Naive thymus-derived CD4-positive, alpha-beta T cell (primary cell): ENCODE measurements at regions of chr18 and their contacts with region 1.

Region 1: GRCh38 chr18:31563778-31564177 is 27.9 kb upstream of the TTR start:
- DNase-seq: no peak
- ATAC-seq: no peak
- H3K4me3 ChIP-seq: no peak overlapping the region
- H3K4me3 Mint-ChIP-seq: no peak overlapping the region
- H3K27ac ChIP-seq: no peak overlapping the region
- H3K27ac Mint-ChIP-seq: no peak overlapping the region
- H3K4me1 ChIP-seq: no peaks in the 10 kb centered on the region
- H3K4me1 Mint-ChIP-seq: no peaks in the 10 kb centered on the region
- H3K27me3 ChIP-seq: no peaks in the 10 kb centered on the region
- H3K27me3 Mint-ChIP-seq: peaks cover 0 to 14% (median 9%) of the 10 kb centered on the region in 5 donors

Region 2: GRCh38 chr18:30971338-30971956 is 592.3 kb before region 1 on chr18:
- CTCF ChIA-PET with region 1: interaction called, 3 read pairs
- POLR2A ChIA-PET with region 1: no interaction called
- intact Hi-C with region 1: loop called in 1 of 2 experiments (anchors 2 kb)
- DNase-seq: peak in 3 of 9 donors; percentile 4 to 14 (median 8)
- ATAC-seq: no peak
- H3K4me3 ChIP-seq: no peak overlapping the region
- H3K4me3 Mint-ChIP-seq: no peak overlapping the region
- H3K27ac ChIP-seq: no peak overlapping the region
- H3K27ac Mint-ChIP-seq: no peak overlapping the region
- H3K4me1 ChIP-seq: no peaks in the 10 kb centered on the region
- H3K4me1 Mint-ChIP-seq: no peaks in the 10 kb centered on the region
- H3K27me3 ChIP-seq: no peaks in the 10 kb centered on the region
- H3K27me3 Mint-ChIP-seq: no peaks in the 10 kb centered on the region

Region 3: GRCh38 chr18:30999186-30999585 is 564.6 kb before region 1 on chr18:
- CTCF ChIA-PET with region 1: no interaction called
- POLR2A ChIA-PET with region 1: no interaction called
- intact Hi-C with region 1: loop called in 1 of 2 experiments (anchors 1 kb)
- DNase-seq: no peak
- ATAC-seq: no peak
- H3K4me3 ChIP-seq: no peak overlapping the region
- H3K4me3 Mint-ChIP-seq: no peak overlapping the region
- H3K27ac ChIP-seq: no peak overlapping the region
- H3K27ac Mint-ChIP-seq: no peak overlapping the region
- H3K4me1 ChIP-seq: no peaks in the 10 kb centered on the region
- H3K4me1 Mint-ChIP-seq: peaks cover 0 to 1% (median 0%) of the 10 kb centered on the region in 7 donors
- H3K27me3 ChIP-seq: no peaks in the 10 kb centered on the region
- H3K27me3 Mint-ChIP-seq: peaks cover 0 to 4% (median 0%) of the 10 kb centered on the region in 5 donors

Region 4: GRCh38 chr18:31710826-31711225 is 147.0 kb after region 1 on chr18:
- CTCF ChIA-PET with region 1: no interaction called
- POLR2A ChIA-PET with region 1: no interaction called
- intact Hi-C with region 1: no loop called
- DNase-seq: no peak
- ATAC-seq: no peak
- H3K4me3 ChIP-seq: no peak overlapping the region
- H3K4me3 Mint-ChIP-seq: no peak overlapping the region
- H3K27ac ChIP-seq: no peak overlapping the region
- H3K27ac Mint-ChIP-seq: no peak overlapping the region
- H3K4me1 ChIP-seq: no peaks in the 10 kb centered on the region
- H3K4me1 Mint-ChIP-seq: no peaks in the 10 kb centered on the region
- H3K27me3 ChIP-seq: no peaks in the 10 kb centered on the region
- H3K27me3 Mint-ChIP-seq: peaks cover 0 to under 1% (median 0%) of the 10 kb centered on the region in 5 donors